PC-3 (cell line): ENCODE measurements at regions of chr11 and their contacts with region 1.

Region 1: GRCh38 chr11:65274735-65275682 is 13.2 kb downstream of the POLA2 start:
- DNase-seq: peak; percentile 96
- ATAC-seq: peak; percentile 66
- H3K4me3 ChIP-seq: no peak overlapping the region
- H3K27ac ChIP-seq: peak overlapping the region; percentile 64
- H3K4me1 ChIP-seq: peaks cover 47% of the 10 kb centered on the region
- H3K27me3 ChIP-seq: no peaks in the 10 kb centered on the region
- CTCF ChIP-seq: peak; percentile 94

Region 2: GRCh38 chr11:65165410-65166317 is 109.3 kb before region 1 on chr11:
- CTCF ChIA-PET with region 1: interaction called, 10 read pairs
- POLR2A ChIA-PET with region 1: no interaction called
- intact Hi-C with region 1: no loop called
- DNase-seq: no peak
- ATAC-seq: no peak
- H3K4me3 ChIP-seq: peak overlapping the region; percentile 44; the same call in 1 of the 2 replicates
- H3K27ac ChIP-seq: no peak overlapping the region
- H3K4me1 ChIP-seq: peaks cover 13% of the 10 kb centered on the region; the same call in 1 of the 2 replicates
- H3K27me3 ChIP-seq: no peaks in the 10 kb centered on the region
- CTCF ChIP-seq: no peak

Region 3: GRCh38 chr11:65225279-65226102 is 49.5 kb before region 1 on chr11:
- CTCF ChIA-PET with region 1: no interaction called
- POLR2A ChIA-PET with region 1: no interaction called
- intact Hi-C with region 1: no loop called
- DNase-seq: no peak
- ATAC-seq: no peak; the same call in 1 of the 2 replicates
- H3K4me3 ChIP-seq: no peak overlapping the region
- H3K27ac ChIP-seq: no peak overlapping the region
- H3K4me1 ChIP-seq: peaks cover 9% of the 10 kb centered on the region
- H3K27me3 ChIP-seq: no peaks in the 10 kb centered on the region
- CTCF ChIP-seq: peak; percentile 33; the same call in 1 of the 2 replicates

Region 4: DNA sequence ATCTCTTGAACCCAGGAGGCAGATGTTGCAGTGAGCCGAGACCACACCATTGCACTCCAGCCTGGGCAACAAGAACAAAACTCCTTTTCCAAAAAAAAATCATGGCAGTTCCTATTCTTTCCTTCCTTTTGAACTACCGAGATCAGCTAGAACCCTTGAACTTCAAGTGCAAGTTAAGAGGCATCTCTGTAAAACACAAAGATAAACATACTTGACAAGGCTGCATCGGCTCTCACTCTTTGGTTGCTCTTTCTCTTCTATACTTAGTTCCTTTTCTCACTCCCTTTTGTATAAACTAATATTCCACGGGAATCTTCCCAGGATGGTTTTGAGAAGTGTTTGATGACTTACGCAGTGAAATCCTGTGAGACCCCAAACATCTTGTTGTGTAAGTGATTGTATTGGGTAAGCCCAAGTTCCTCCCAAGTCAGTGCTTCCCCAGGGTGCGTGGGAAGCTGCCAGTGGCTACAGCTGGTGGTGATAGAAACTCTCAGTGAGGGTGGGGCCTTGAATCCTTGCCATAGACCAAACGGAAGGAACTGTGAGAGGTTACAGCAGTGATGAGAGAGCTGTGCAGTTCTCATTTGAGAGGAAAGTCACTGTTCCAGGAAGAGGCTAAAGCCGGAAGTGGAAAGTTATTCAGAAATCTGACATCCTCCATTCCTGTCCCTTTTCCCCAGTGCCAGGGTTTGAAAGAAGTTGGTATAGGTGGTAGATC is 15.6 kb after region 1 on chr11:
- CTCF ChIA-PET with region 1: interaction called, 18 read pairs
- POLR2A ChIA-PET with region 1: interaction called, 31 read pairs
- intact Hi-C with region 1: no loop called
- DNase-seq: peak; percentile 41
- ATAC-seq: peak; percentile 78
- H3K4me3 ChIP-seq: no peak overlapping the region
- H3K27ac ChIP-seq: peak overlapping the region; percentile 63
- H3K4me1 ChIP-seq: peaks cover 17% of the 10 kb centered on the region
- H3K27me3 ChIP-seq: no peaks in the 10 kb centered on the region
- CTCF ChIP-seq: no peak

Region 5: DNA sequence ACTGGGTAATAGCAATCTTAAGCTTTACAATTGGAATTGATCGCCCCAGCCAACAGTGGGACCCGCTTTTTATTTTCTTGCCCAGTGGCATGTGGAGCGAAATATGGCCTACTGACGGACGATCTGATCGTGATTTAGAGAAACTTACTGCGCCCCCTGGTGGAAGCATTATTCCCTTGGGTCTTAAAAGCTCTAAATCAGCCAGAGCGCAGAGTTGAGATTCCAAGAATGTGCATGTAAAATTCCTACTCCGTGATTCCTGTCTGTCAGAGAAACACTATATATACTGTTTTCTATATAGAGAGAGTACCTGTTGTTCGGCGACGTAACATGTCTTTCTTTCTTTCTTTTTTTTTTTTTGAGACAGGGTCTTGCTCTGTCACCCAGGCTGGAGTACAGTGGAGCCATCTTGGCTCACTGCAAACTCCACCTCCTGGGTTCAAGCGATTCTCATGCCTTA is 55.0 kb after region 1 on chr11:
- CTCF ChIA-PET with region 1: interaction called, 132 read pairs
- POLR2A ChIA-PET with region 1: interaction called, 42 read pairs
- intact Hi-C with region 1: loop called (anchors 1 kb)
- DNase-seq: peak; percentile 98
- ATAC-seq: peak; percentile 46
- H3K4me3 ChIP-seq: peak overlapping the region; percentile 15; the same call in 1 of the 2 replicates
- H3K27ac ChIP-seq: no peak overlapping the region
- H3K4me1 ChIP-seq: peaks cover 11% of the 10 kb centered on the region
- H3K27me3 ChIP-seq: no peaks in the 10 kb centered on the region
- CTCF ChIP-seq: peak; percentile 91

Region 6: DNA sequence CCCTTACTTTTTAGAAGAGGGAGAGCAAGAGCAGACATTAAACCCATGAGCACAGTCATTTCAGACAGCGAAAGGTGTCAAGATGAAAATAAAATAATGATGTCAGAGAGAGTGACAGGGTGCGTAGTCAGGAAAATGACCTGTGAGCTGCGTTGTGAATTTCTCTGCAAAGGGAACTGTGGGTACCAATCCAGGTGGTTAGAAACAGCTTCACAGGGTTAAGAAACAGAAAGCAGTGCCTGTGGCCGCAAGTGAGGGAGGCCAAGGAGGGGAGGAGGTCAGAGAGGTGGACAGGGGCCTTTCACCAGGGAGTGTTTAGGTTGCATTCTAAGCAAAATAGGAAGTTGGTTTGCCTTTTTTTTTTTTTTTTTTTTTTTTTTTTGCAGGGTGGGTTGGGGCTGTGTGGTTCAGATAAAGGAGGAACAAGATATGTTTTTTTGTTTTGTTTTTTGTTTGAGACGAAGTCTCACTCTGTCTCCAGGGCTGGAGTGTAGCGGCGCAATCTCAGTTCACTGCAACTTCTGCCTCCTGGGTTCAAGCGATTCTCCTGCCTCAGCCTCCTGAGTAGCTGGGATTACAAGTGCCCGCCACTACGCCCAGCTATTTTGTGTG is 87.4 kb after region 1 on chr11:
- CTCF ChIA-PET with region 1: no interaction called
- POLR2A ChIA-PET with region 1: no interaction called
- intact Hi-C with region 1: no loop called
- DNase-seq: no peak
- ATAC-seq: no peak
- H3K4me3 ChIP-seq: no peak overlapping the region
- H3K27ac ChIP-seq: no peak overlapping the region
- H3K4me1 ChIP-seq: no peaks in the 10 kb centered on the region
- H3K27me3 ChIP-seq: no peaks in the 10 kb centered on the region
- CTCF ChIP-seq: no peak

Region 7: DNA sequence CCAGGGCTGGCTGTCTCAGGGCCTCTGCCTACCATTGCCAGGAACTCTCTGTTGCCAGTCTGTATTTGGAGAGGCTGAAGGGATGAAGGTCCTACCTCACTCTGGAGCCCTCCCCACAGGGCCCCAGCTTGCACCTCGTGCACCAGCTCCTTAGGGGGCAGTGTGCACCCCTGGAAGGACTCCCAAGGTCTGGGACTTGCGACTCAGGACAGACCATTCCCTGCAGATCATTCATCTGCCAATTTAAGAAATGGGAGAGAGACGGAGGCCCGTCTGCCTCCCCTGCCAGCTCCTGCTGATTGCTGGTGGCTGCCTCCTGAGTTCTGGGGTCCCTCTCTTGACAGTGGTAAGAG is 196.4 kb after region 1 on chr11:
- CTCF ChIA-PET with region 1: interaction called, 11 read pairs
- POLR2A ChIA-PET with region 1: no interaction called
- intact Hi-C with region 1: no loop called
- DNase-seq: peak; percentile 59
- ATAC-seq: peak; percentile 30
- H3K4me3 ChIP-seq: peak overlapping the region; percentile 5; the same call in 1 of the 2 replicates
- H3K27ac ChIP-seq: peak overlapping the region; percentile 95
- H3K4me1 ChIP-seq: peaks cover 36% of the 10 kb centered on the region
- H3K27me3 ChIP-seq: no peaks in the 10 kb centered on the region
- CTCF ChIP-seq: peak; percentile 66